Breast epithelium (tissue), 4 donors: ENCODE measurements at regions of chr5 and their contacts with region 1.

Region 1: GRCh38 chr5:60636001-60636400 is 64.0 kb downstream of the DEPDC1B start:
- DNase-seq: no peak
- H3K4me3 ChIP-seq: no peak overlapping the region
- H3K27ac ChIP-seq: no peak overlapping the region
- H3K4me1 ChIP-seq: no peaks in the 10 kb centered on the region
- H3K27me3 ChIP-seq: no peaks in the 10 kb centered on the region
- CTCF ChIP-seq: no peak
- POLR2A ChIP-seq: no peak

Region 2: GRCh38 chr5:60613826-60614225 is 22.2 kb before region 1 on chr5:
- intact Hi-C with region 1: loop called (anchors 2 kb)
- DNase-seq: no peak
- H3K4me3 ChIP-seq: no peak overlapping the region
- H3K27ac ChIP-seq: no peak overlapping the region
- H3K4me1 ChIP-seq: no peaks in the 10 kb centered on the region
- H3K27me3 ChIP-seq: no peaks in the 10 kb centered on the region
- CTCF ChIP-seq: no peak
- POLR2A ChIP-seq: no peak

Region 3: DNA sequence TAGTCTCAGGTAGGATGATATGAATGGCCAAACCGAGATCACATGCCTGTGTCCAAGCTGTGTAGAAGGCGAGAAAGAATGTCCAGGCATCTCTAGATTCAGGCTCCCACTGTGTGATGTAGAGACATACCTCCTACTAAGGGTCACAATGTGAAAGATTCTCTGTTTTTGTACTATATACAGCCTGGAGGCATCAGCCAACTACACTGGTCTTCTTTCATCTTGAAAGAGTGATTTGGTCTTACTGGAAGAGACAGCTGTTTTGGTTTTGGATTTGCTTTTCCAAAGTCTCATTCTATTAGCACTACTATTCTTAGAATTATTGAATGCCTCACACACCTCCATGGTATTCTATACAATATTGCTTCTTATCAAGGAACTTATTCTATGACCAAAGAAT is 282.5 kb after region 1 on chr5:
- intact Hi-C with region 1: no loop called
- DNase-seq: no peak
- H3K4me3 ChIP-seq: no peak overlapping the region
- H3K27ac ChIP-seq: no peak overlapping the region
- H3K4me1 ChIP-seq: no peaks in the 10 kb centered on the region
- H3K27me3 ChIP-seq: no peaks in the 10 kb centered on the region
- CTCF ChIP-seq: no peak
- POLR2A ChIP-seq: no peak

Region 4: DNA sequence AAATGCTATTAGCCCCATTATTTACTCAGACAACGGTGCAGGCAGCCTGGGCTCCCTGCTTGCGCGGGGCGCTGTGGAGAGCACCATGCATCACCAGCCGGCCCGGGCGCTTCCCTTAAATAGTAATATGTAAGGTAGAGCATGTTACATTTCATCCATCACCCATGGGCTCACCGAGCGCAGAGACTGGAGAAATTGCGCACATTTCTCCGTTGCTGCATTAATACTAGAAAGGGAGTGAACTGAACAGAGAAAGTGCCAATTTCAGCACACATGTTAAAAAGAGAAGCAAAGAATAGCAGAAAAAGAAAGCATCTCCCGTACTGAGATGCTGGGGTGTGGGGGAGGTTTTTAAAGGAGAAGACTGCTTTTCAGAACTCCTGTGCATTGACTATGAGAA is 1096.4 kb after region 1 on chr5:
- intact Hi-C with region 1: no loop called
- DNase-seq: no peak
- H3K4me3 ChIP-seq: no peak overlapping the region
- H3K27ac ChIP-seq: no peak overlapping the region
- H3K4me1 ChIP-seq: no peaks in the 10 kb centered on the region
- H3K27me3 ChIP-seq: no peaks in the 10 kb centered on the region
- CTCF ChIP-seq: no peak
- POLR2A ChIP-seq: no peak